Heart left ventricle (tissue), 16 donors: ENCODE measurements at regions of chr15 and their contacts with region 1.

Region 1: GRCh38 chr15:48877630-48878595 is at the start of gene EID1:
- DNase-seq: peak; percentile 91 to 96 (median 93)
- ATAC-seq: peak; percentile 99 to 100 (median 100)
- H3K4me3 ChIP-seq: peak within 1 kb of the TSS; percentile 56 to 94 (median 74)
- H3K27ac ChIP-seq: peak within 1 kb of the TSS; percentile 51 to 96 (median 90)
- H3K4me1 ChIP-seq: peaks cover 0 to 25% (median 16%) of the 10 kb centered on the region in 12 donors
- H3K27me3 ChIP-seq: no peaks in the 10 kb centered on the region
- CTCF ChIP-seq: peak in 2 of 12 donors; percentile 8 to 29
- POLR2A ChIP-seq: peak in 1 of 2 donors; percentile 77
- total RNA-seq, gene EID1: 169 to 393 (median 224) TPM

Region 2: GRCh38 chr15:48940448-48940893 is 62.6 kb after region 1 on chr15:
- intact Hi-C with region 1: no loop called
- DNase-seq: no peak
- ATAC-seq: no peak
- H3K4me3 ChIP-seq: no peak overlapping the region
- H3K27ac ChIP-seq: no peak overlapping the region
- H3K4me1 ChIP-seq: peaks cover 0 to 10% (median 3%) of the 10 kb centered on the region in 12 donors
- H3K27me3 ChIP-seq: no peaks in the 10 kb centered on the region
- CTCF ChIP-seq: no peak
- POLR2A ChIP-seq: no peak

Region 3: GRCh38 chr15:48963524-48964113 is 85.7 kb after region 1 on chr15 and contains the start of gene SHC4:
- intact Hi-C with region 1: loop called in 7 of 10 experiments (anchors 2 to 10 kb)
- DNase-seq: peak; percentile 56 to 72 (median 69)
- ATAC-seq: peak; percentile 73 to 89 (median 78)
- H3K4me3 ChIP-seq: peak within 1 kb of the TSS; percentile 18 to 71 (median 58)
- H3K27ac ChIP-seq: peak within 1 kb of the TSS in 6 of 12 donors; percentile 1 to 67 (median 40)
- H3K4me1 ChIP-seq: peaks cover 0 to 25% (median 9%) of the 10 kb centered on the region in 12 donors
- H3K27me3 ChIP-seq: peaks cover 0 to 12% (median 0%) of the 10 kb centered on the region in 9 donors
- CTCF ChIP-seq: peak in 8 of 12 donors; percentile 11 to 49 (median 27)
- POLR2A ChIP-seq: no peak
- total RNA-seq, gene SHC4: 1.8 to 4.1 (median 2.6) TPM

Region 4: DNA sequence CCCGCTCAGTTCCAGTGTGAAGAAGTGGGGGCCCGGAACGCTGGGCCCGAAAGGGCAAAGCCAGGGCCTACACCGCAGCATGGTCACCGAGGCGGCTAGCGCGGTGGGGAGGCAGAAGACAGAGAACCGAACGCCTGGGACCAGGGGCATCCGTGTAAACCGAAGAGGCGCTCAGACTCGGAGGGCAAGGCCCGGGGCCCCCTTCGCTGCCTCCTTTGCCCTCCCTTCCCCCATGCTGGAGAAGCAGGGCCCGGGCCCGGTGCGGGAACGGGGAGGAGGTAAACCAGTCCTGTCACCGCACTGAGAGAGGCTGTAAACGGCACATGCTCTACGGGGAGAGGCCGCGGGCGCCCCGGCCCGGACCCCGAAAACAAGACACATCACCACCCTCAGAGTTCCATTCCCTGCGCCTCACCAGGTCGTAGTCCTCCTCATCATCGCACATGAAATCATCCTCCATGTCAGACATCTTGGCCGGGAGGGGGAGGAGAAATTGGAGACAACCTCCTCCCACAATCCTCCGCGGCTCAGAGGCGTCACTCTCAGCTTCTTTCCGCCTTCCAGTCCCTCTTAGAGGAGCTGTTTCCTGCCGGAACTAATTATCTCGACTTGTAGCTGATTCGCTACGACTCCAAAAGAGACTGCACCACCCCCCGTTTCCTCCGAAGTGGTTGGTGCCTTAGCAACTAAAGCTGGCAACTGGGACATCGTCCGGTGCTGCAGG is 277.4 kb after region 1 on chr15 and contains the start of gene COPS2:
- intact Hi-C with region 1: loop called in 2 of 10 experiments (anchors 5 kb)
- DNase-seq: peak; percentile 91 to 95 (median 94)
- ATAC-seq: peak; percentile 98 to 99 (median 99)
- H3K4me3 ChIP-seq: peak within 1 kb of the TSS; percentile 72 to 96 (median 89)
- H3K27ac ChIP-seq: peak within 1 kb of the TSS; percentile 11 to 93 (median 80)
- H3K4me1 ChIP-seq: peaks cover 0 to 52% (median 33%) of the 10 kb centered on the region in 12 donors
- H3K27me3 ChIP-seq: no peaks in the 10 kb centered on the region
- CTCF ChIP-seq: peak in 2 of 12 donors; percentile 12 to 17
- POLR2A ChIP-seq: peak in 1 of 2 donors; percentile 62
- total RNA-seq, gene COPS2: 41.6 to 94.4 (median 82.8) TPM

Region 5: GRCh38 chr15:49421991-49422390 is 544.1 kb after region 1 on chr15:
- intact Hi-C with region 1: loop called in 2 of 10 experiments (anchors 10 kb)
- DNase-seq: peak in 3 of 5 donors; percentile 20 to 55 (median 25)
- ATAC-seq: peak in 3 of 4 donors; percentile 52 to 64 (median 62)
- H3K4me3 ChIP-seq: peak overlapping the region in 9 of 12 donors; percentile 19 to 62 (median 32)
- H3K27ac ChIP-seq: peak overlapping the region in 6 of 12 donors; percentile 63 to 77 (median 69)
- H3K4me1 ChIP-seq: peaks cover 0 to 9% (median 0%) of the 10 kb centered on the region in 12 donors
- H3K27me3 ChIP-seq: no peaks in the 10 kb centered on the region
- CTCF ChIP-seq: peak; percentile 50 to 84 (median 67)
- POLR2A ChIP-seq: no peak